Calu3 (cell line): ENCODE measurements at regions of chr3 and their contacts with region 1.

Region 1: GRCh38 chr3:192444096-192444790 is 283.1 kb downstream of the FGF12 start:
- DNase-seq: peak; percentile 86
- H3K4me3 Mint-ChIP-seq: no peak overlapping the region
- H3K27ac Mint-ChIP-seq: peak overlapping the region; percentile 20
- H3K4me1 Mint-ChIP-seq: peaks cover 16% of the 10 kb centered on the region
- H3K27me3 Mint-ChIP-seq: peaks cover 25% of the 10 kb centered on the region
- CTCF ChIP-seq: peak; percentile 100

Region 2: DNA sequence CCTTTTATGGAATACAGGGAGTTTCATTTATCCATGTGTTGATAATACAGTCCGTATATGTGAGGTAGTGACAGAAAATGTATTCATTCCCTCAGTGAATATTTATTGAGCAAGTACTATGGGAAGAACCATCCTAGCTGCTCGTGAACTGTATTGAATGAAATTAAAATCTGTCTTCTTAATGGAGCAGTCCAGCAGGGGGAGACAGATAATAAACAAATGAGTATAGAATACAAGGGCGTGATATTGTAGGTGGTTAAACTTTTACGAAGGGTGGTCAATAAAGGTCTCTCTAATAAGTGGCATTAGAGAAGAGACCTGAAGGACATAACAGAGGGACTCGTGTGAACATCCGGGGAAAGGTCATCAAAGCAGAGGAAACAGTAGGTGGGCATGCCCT is 1307.9 kb before region 1 on chr3:
- CTCF ChIA-PET with region 1: interaction called, 3 read pairs
- intact Hi-C with region 1: loop called (anchors 10 kb)
- DNase-seq: peak; percentile 36
- H3K4me3 Mint-ChIP-seq: no peak overlapping the region
- H3K27ac Mint-ChIP-seq: no peak overlapping the region
- H3K4me1 Mint-ChIP-seq: peaks cover 18% of the 10 kb centered on the region
- H3K27me3 Mint-ChIP-seq: no peaks in the 10 kb centered on the region
- CTCF ChIP-seq: peak; percentile 56

Region 3: DNA sequence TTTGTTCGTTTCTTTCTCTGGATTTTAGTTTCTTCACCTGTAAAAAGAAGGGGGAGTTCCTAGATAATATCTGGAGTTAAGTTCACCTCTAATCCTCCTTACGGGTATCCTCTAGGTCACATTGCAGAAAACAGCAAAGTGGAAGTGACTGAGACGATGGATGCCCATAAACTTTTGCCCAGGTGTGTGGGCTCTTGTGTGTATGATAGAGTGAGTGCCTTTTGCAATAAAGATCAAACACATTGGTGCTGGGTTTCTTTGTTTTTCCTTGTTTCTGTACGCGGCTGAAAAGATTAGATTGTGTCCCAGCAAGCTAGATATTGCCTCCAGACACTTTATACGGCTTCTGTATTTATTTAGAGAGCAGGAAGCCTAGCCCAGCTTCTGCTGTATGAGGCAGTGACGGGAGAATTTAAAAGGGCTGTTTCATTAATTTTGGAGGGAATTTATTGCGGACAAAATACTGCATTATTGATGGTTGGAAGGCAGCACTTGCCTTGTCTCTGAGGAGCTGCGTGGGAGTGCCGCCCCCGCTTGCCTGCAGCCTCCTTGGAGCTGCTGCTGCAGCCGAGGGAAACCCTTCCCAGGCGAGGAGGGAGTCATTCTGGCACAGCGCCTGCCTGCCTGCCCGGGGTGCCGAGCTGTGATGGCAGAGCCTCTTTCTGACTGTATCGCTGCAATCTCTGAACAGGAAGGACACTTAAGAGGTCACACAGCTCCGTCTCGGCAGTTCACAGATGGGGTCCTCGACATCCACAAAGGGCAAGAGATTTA is 944.7 kb before region 1 on chr3:
- CTCF ChIA-PET with region 1: no interaction called
- intact Hi-C with region 1: loop called (anchors 5 kb)
- DNase-seq: peak; percentile 76
- H3K4me3 Mint-ChIP-seq: peak overlapping the region; percentile 76
- H3K27ac Mint-ChIP-seq: peak overlapping the region; percentile 68
- H3K4me1 Mint-ChIP-seq: peaks cover 16% of the 10 kb centered on the region
- H3K27me3 Mint-ChIP-seq: no peaks in the 10 kb centered on the region
- CTCF ChIP-seq: no peak

Region 4: DNA sequence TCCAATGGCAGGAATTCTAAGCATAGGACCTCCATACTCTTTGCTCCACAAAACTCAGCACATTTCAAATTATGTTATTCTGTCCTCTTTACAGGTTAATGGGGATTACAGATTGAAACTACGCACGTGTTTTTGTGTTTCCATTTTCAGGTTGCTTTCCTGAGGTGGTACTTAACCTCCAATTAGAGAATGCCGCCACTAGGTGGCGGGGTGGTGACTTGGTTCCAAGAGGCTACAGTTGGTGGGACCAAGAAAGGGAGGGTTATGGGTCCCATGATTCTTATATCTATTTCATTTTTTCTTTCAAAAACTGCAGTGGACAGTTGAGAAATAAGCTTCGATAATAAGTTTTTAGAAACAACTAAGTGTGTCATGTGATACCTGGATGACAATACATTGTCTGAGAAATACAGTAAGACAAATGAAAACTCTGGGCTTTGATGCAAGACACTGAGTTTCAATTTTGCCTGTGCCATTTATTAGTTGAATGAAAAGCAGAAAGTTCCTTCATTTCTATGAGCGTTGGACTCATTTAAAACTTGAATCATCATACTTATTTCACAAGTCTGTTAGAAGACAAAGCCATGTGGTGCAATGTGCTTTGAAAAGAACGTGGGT is 255.9 kb before region 1 on chr3:
- CTCF ChIA-PET with region 1: interaction called, 27 read pairs
- intact Hi-C with region 1: loop called (anchors 1 kb)
- DNase-seq: peak; percentile 84
- H3K4me3 Mint-ChIP-seq: no peak overlapping the region
- H3K27ac Mint-ChIP-seq: no peak overlapping the region
- H3K4me1 Mint-ChIP-seq: peaks cover 15% of the 10 kb centered on the region
- H3K27me3 Mint-ChIP-seq: no peaks in the 10 kb centered on the region
- CTCF ChIP-seq: peak; percentile 94

Region 5: GRCh38 chr3:192336287-192336686 is 108.0 kb before region 1 on chr3:
- CTCF ChIA-PET with region 1: no interaction called
- intact Hi-C with region 1: no loop called
- DNase-seq: no peak
- H3K4me3 Mint-ChIP-seq: no peak overlapping the region
- H3K27ac Mint-ChIP-seq: no peak overlapping the region
- H3K4me1 Mint-ChIP-seq: peaks cover 6% of the 10 kb centered on the region
- H3K27me3 Mint-ChIP-seq: no peaks in the 10 kb centered on the region
- CTCF ChIP-seq: no peak

Region 6: GRCh38 chr3:192399767-192400166 is 44.5 kb before region 1 on chr3:
- CTCF ChIA-PET with region 1: no interaction called
- intact Hi-C with region 1: no loop called
- DNase-seq: no peak
- H3K4me3 Mint-ChIP-seq: no peak overlapping the region
- H3K27ac Mint-ChIP-seq: no peak overlapping the region
- H3K4me1 Mint-ChIP-seq: no peaks in the 10 kb centered on the region
- H3K27me3 Mint-ChIP-seq: no peaks in the 10 kb centered on the region
- CTCF ChIP-seq: no peak

Region 7: DNA sequence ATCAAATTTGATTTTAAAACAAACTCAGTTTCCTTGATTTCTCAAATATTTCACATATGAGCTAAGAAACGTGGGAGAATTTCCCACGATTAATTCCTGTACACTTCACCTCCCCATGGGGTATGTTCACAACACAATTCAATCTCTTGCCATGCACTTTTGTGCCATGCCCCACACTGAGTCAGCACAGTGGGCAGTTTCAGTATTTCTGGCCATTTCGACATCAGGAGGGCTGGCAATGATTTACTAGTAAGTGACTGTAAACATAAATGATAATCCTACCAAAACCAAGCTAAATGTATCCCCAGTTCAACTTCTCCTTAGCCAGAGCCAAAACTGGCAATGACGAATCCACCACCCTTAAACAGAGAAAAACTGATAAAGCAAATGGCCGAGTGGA is 10.5 kb before region 1 on chr3:
- CTCF ChIA-PET with region 1: interaction called, 25 read pairs
- intact Hi-C with region 1: no loop called
- DNase-seq: peak; percentile 75
- H3K4me3 Mint-ChIP-seq: peak overlapping the region; percentile 31
- H3K27ac Mint-ChIP-seq: peak overlapping the region; percentile 66
- H3K4me1 Mint-ChIP-seq: peaks cover 12% of the 10 kb centered on the region
- H3K27me3 Mint-ChIP-seq: no peaks in the 10 kb centered on the region
- CTCF ChIP-seq: no peak